ENCODE measurements at regions of chr10 and their contacts with region 1.

Region 1: DNA sequence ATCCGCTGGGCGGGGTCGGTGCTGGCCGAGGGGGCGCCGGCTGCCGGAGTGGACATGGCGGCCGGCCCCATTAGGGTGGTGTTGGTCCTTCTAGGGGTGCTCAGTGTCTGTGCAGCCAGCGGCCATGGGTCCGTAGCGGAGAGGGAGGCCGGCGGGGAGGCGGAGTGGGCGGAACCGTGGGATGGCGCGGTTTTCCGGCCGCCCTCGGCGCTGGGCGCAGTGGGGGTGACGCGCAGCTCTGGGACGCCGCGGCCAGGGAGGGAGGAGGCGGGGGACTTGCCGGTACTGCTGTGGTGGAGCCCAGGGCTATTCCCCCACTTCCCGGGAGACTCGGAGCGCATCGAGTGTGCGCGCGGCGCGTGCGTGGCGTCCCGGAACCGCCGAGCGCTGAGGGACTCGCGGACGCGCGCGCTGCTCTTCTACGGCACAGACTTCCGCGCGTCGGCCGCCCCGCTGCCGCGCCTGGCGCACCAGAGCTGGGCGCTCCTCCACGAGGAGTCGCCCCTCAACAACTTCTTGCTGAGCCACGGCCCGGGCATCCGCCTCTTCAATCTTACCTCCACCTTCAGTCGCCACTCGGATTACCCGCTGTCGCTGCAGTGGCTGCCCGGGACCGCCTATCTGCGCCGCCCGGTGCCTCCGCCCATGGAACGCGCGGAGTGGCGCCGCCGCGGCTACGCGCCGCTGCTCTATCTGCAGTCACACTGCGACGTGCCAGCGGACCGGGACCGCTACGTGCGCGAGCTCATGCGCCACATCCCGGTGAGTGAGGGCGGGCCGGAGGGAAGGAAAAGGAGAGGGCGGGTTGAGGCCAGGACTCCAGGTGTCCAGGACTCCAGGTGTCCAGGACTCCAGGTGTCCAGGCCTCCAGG is 9.3 kb upstream of the CHCHD1 start:
- DNase-seq: peak; percentile 90
- H3K4me3 ChIP-seq: peak overlapping the region; percentile 84 to 92 (median 88)
- H3K27ac ChIP-seq: peak overlapping the region; percentile 97 to 98 (median 98)
- H3K4me1 ChIP-seq: peaks cover 0 to 35% (median 30%) of the 10 kb centered on the region in 4 donors
- H3K27me3 ChIP-seq: no peaks in the 10 kb centered on the region
- CTCF ChIP-seq: no peak
- EP300 ChIP-seq: no peak
- POLR2A ChIP-seq: peak; percentile 65 to 71

Region 2: GRCh38 chr10:73743905-73744663 is 28.4 kb before region 1 on chr10 and contains the start of gene SEC24C:
- intact Hi-C with region 1: loop called (anchors 2 kb)
- DNase-seq: peak; percentile 99
- H3K4me3 ChIP-seq: peak within 1 kb of the TSS; percentile 57 to 98 (median 94)
- H3K27ac ChIP-seq: peak within 1 kb of the TSS; percentile 90 to 96 (median 94)
- H3K4me1 ChIP-seq: peaks cover 0 to 46% (median 34%) of the 10 kb centered on the region in 4 donors
- H3K27me3 ChIP-seq: no peaks in the 10 kb centered on the region
- CTCF ChIP-seq: no peak
- EP300 ChIP-seq: peak in 1 of 4 donors; percentile 68
- POLR2A ChIP-seq: peak; percentile 52 to 63
- total RNA-seq, gene SEC24C: 34.9 to 42.7 (median 39.0) TPM

Measured in sigmoid colon (tissue), 7 donors.